MCF 10A (cell line): ENCODE measurements at regions of chr4 and their contacts with region 1.

Region 1: GRCh38 chr4:55184600-55185523 is 59.5 kb upstream of the KDR start:
- DNase-seq: peak; percentile 47
- H3K4me3 Mint-ChIP-seq: no peak overlapping the region
- H3K27ac Mint-ChIP-seq: peak overlapping the region; percentile 84
- H3K4me1 Mint-ChIP-seq: peaks cover 29% of the 10 kb centered on the region
- H3K27me3 Mint-ChIP-seq: no peaks in the 10 kb centered on the region
- CTCF ChIP-seq: peak; percentile 37

Region 2: GRCh38 chr4:55008166-55009070 is 176.4 kb before region 1 on chr4:
- CTCF ChIA-PET with region 1: interaction called, 13 read pairs
- POLR2A ChIA-PET with region 1: interaction called, 3 read pairs
- intact Hi-C with region 1: no loop called
- DNase-seq: peak; percentile 39
- H3K4me3 Mint-ChIP-seq: no peak overlapping the region
- H3K27ac Mint-ChIP-seq: peak overlapping the region; percentile 36
- H3K4me1 Mint-ChIP-seq: no peaks in the 10 kb centered on the region
- H3K27me3 Mint-ChIP-seq: no peaks in the 10 kb centered on the region
- CTCF ChIP-seq: peak; percentile 32

Region 3: DNA sequence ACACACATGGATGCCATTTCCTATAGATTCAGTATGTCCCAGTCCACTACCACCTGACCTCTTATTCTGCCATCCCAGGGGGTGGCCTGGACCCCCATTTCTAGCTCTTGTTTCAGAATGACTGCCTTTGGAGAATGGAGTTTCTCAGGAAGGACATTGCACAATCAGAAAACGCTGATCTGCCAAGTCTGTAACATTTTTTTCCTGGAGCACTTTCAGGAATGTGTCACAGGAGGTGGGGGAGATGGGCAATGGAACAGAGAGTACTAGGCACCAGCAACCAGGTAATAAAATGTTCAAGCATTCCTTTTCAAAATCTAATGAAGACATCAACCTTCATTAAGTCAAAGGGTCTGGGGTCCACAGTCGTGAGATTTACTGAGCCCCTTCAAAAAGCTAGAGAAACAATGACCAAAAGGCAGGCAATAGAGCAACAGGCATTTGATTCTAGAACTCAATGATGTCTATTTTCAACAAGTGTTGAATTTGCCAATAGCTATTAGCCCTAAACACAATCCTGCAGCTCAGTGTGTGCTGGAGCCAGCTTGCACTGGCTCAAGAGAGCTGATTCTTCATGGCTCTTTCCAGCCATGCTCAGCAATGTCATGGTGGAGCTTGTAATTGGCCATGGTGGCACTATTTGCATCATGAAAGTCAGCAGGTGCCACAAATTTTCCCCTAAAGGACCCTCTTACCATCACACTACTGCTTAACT is 146.5 kb before region 1 on chr4:
- CTCF ChIA-PET with region 1: interaction called, 6 read pairs
- POLR2A ChIA-PET with region 1: interaction called, 15 read pairs
- intact Hi-C with region 1: no loop called
- DNase-seq: peak; percentile 77
- H3K4me3 Mint-ChIP-seq: peak overlapping the region; percentile 59
- H3K27ac Mint-ChIP-seq: peak overlapping the region; percentile 73
- H3K4me1 Mint-ChIP-seq: peaks cover 59% of the 10 kb centered on the region
- H3K27me3 Mint-ChIP-seq: no peaks in the 10 kb centered on the region
- CTCF ChIP-seq: no peak

Region 4: DNA sequence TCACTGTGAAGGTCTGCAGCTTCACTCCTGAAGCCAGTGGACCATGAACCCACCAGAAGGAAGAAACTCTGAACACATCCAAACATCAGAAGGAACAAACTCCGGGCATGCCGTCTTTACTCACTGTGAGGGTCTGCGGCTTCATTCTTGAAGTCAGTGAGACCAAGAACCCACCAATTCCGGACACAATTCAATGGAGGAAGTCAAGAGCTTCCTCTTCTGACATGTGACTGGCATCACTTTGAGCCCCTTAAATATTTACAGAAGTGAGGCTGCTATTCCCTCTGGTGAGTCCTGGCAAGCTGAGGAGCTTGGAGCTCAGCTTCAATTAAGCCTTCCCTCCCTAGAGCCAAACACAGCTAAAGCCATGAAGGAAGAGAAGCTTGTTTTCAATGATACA is 57.6 kb after region 1 on chr4:
- CTCF ChIA-PET with region 1: interaction called, 11 read pairs
- POLR2A ChIA-PET with region 1: no interaction called
- intact Hi-C with region 1: no loop called
- DNase-seq: no peak
- H3K4me3 Mint-ChIP-seq: no peak overlapping the region
- H3K27ac Mint-ChIP-seq: no peak overlapping the region
- H3K4me1 Mint-ChIP-seq: no peaks in the 10 kb centered on the region
- H3K27me3 Mint-ChIP-seq: no peaks in the 10 kb centered on the region
- CTCF ChIP-seq: no peak